HepG2 (cell line): ENCODE measurements at regions of chr7 and their contacts with region 1.

Region 1: DNA sequence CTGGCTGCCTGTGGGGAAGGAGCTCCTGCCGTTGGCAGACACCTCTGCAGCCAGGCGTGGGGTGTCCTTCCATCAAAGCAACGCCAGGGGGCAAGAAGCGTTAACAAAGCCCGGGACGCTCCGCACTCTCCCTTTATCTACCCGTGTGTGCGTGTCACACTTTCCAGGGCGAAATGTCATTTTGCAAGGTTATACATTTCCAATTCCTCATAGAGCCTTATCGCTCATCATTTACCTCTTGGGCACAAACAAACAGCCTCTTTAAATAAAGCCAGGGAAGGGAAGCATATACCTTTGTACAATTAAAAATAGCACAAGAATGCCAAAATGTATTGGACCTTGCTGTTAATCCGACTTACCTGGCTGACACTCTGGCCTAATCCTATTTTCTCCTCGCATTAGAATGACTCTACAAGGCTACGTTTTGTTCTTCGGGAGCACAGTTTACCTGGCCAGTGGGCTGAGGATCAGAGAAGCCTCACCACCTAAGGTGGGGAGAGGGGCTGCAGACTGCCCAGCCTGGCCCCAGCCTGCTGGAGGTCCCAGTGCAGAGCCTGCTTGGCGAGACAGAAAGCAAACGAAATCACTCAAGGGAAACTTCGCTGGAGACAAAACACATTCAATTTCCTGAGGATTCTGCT is 77.6 kb upstream of the EN2 start:
- DNase-seq: peak; percentile 59
- ATAC-seq: peak; percentile 88
- H3K4me3 ChIP-seq: no peak overlapping the region
- H3K27ac ChIP-seq: no peak overlapping the region
- H3K4me1 ChIP-seq: peaks cover 25% of the 10 kb centered on the region
- H3K27me3 ChIP-seq: peaks cover 13 to 97% of the 10 kb centered on the region in 2 experiments; a peak in 4 of 5 replicates
- CTCF ChIP-seq: peak; percentile 84
- EP300 ChIP-seq: no peak
- POLR2A ChIP-seq: no peak
- RAD21 ChIP-seq: peak; percentile 57

Region 2: DNA sequence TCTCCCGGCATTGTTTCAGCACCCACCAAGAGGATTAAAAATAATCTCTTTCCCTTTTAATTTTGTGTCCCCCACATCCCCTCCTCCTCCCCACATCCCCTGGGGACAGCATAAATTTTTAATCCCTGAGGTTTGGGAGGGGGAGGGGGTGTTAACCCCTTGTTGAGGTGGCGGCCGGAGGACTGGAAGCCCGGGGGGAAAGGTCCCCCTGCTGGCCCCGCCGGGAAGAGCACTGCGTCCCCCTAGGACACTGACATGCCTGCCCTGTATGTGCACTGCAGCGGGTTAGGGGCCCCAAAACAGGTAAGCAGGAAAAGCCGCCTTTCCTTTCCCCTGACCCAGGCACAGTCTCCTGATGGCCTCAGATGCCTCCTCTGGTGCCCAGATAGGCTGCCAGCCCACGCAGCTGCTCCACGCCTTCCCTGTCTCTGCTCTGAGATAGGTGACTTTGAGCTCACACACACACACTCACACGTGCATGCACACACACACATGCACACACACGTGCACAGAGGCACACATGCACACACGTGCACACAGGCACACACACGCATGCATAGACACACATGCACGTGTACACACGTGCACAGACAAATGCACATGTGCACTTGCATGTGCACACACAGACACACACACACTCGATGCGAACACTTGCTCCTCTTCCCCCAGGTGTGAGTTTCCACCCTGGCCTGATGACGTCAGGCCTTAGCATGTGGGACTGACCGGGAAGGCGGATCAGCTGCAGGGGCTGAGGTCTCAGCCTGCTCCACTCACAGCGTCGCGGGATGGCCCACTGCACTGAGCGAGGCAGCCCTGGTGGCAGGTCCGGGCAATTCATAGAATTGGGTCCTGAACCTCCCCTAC is 153.7 kb after region 1 on chr7:
- CTCF ChIA-PET with region 1: no interaction called
- POLR2A ChIA-PET with region 1: no interaction called
- in situ Hi-C with region 1: no loop called
- intact Hi-C with region 1: loop called (anchors 2 kb)
- DNase-seq: peak; percentile 16
- ATAC-seq: peak; percentile 89
- H3K4me3 ChIP-seq: peak overlapping the region; percentile 30 to 66 (median 43); a peak in 5 of 6 replicates
- H3K27ac ChIP-seq: no peak overlapping the region
- H3K4me1 ChIP-seq: peaks cover 33% of the 10 kb centered on the region
- H3K27me3 ChIP-seq: peaks cover 12 to 75% of the 10 kb centered on the region in 2 experiments; a peak in 4 of 5 replicates
- CTCF ChIP-seq: peak; percentile 73
- EP300 ChIP-seq: no peak
- POLR2A ChIP-seq: no peak
- RAD21 ChIP-seq: no peak

Region 3: DNA sequence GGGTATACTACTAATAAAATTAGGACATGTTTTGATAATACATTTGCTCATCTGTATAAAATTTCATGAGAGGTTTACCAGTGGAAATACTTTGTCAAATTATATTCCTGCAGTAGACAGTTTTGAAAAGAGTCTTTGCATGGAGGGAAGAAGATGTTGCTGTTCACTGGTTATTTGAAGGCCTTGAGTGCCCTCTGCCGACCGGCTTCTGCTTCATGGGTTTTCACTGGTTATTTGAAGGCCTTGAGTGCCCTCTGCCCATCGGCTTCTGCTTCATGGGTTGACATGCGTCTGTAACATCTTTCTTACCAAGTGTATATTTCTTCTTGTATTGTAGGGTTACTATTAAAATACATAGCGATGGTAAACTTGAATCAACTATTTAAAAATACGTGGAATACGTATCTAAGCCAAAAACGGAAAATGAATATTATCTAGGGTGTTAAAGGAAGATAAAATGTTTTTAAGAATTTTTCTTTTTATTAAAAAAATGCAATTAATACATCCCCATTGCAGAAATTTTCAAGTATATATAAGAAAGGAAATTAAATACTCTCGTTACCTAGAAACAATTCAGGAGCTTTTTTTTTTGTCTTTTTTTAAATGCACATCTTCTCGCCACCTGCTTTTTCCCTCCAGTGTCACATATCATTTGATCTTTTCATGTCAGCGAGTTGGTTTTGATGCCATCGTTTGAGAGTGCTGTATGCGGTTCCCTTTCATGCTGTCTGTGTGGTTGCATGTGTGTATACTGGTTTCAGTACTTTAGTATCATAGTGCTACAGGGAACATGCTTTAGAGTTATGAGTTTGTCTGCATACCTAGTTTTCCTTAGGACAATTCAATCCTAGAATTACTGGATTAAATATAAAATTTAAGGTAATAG is 358.6 kb after region 1 on chr7:
- CTCF ChIA-PET with region 1: interaction called, 5 read pairs
- POLR2A ChIA-PET with region 1: no interaction called
- in situ Hi-C with region 1: no loop called
- intact Hi-C with region 1: loop called (anchors 1 kb)
- DNase-seq: peak; percentile 74
- ATAC-seq: peak; percentile 90
- H3K4me3 ChIP-seq: no peak overlapping the region
- H3K27ac ChIP-seq: no peak overlapping the region
- H3K4me1 ChIP-seq: no peaks in the 10 kb centered on the region
- H3K27me3 ChIP-seq: no peaks in the 10 kb centered on the region
- CTCF ChIP-seq: peak; percentile 84
- EP300 ChIP-seq: no peak
- POLR2A ChIP-seq: no peak
- RAD21 ChIP-seq: peak; percentile 80

Region 4: GRCh38 chr7:155763691-155764437 is 383.5 kb after region 1 on chr7:
- CTCF ChIA-PET with region 1: interaction called, 7 read pairs
- POLR2A ChIA-PET with region 1: no interaction called
- in situ Hi-C with region 1: loop called (anchors 25 kb)
- intact Hi-C with region 1: loop called (anchors 10 kb)
- DNase-seq: no peak
- ATAC-seq: no peak
- H3K4me3 ChIP-seq: no peak overlapping the region
- H3K27ac ChIP-seq: no peak overlapping the region
- H3K4me1 ChIP-seq: no peaks in the 10 kb centered on the region
- H3K27me3 ChIP-seq: no peaks in the 10 kb centered on the region
- CTCF ChIP-seq: no peak
- EP300 ChIP-seq: no peak
- POLR2A ChIP-seq: no peak
- RAD21 ChIP-seq: no peak